A673 (cell line): ENCODE measurements at regions of chr10 and their contacts with region 1.

Region 1: DNA sequence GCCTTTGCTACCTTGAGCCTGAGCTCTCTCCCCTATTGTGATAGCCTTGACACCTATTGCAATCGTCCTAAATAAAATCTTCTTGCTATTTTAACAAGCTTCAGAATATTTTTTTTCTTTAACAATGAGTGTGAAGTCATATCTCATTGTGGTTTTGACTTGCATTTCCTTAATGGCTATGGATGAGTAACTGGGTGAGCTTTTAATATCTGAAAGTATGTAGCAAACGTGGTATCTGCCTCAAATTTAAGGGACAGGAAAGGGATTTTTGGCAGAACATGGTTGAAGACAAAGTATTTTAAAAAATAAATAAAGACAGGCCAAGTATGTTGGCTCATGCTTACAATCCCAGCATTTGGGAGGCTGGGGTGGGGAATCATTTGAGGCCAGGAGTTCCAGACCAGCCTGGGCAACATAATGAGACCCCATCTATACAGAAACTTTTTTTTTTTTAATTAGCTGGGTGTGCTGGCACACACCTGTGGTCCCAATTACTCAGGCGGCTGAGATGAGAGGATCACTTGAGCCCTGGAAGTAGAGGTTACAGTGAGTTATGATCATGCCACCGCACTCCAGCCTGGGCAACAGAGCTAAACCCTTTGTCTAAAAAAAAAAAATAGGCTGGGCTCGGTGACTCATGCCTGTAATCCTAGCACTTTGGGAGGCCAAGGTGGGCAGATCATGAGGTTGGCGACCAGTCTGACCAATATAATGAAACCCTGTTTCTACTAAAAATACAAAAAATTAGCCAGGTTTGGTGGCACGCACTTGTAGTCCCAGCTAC is 319.3 kb upstream of the NRP1 start:
- DNase-seq: no peak
- H3K4me3 ChIP-seq: no peak overlapping the region
- H3K27ac ChIP-seq: no peak overlapping the region
- H3K4me1 ChIP-seq: no peaks in the 10 kb centered on the region
- H3K27me3 ChIP-seq: no peaks in the 10 kb centered on the region
- CTCF ChIP-seq: no peak

Region 2: GRCh38 chr10:33015761-33016547 is 637.8 kb before region 1 on chr10:
- CTCF ChIA-PET with region 1: no interaction called
- POLR2A ChIA-PET with region 1: no interaction called
- intact Hi-C with region 1: no loop called
- DNase-seq: no peak
- H3K4me3 ChIP-seq: no peak overlapping the region
- H3K27ac ChIP-seq: no peak overlapping the region
- H3K4me1 ChIP-seq: no peaks in the 10 kb centered on the region
- H3K27me3 ChIP-seq: no peaks in the 10 kb centered on the region
- CTCF ChIP-seq: no peak

Region 3: GRCh38 chr10:33386971-33387370 is 266.8 kb before region 1 on chr10:
- CTCF ChIA-PET with region 1: interaction called, 21 read pairs
- POLR2A ChIA-PET with region 1: no interaction called
- intact Hi-C with region 1: no loop called
- DNase-seq: no peak
- H3K4me3 ChIP-seq: no peak overlapping the region
- H3K27ac ChIP-seq: no peak overlapping the region
- H3K4me1 ChIP-seq: peaks cover 4% of the 10 kb centered on the region
- H3K27me3 ChIP-seq: no peaks in the 10 kb centered on the region
- CTCF ChIP-seq: no peak